GM12878 (cell line): ENCODE measurements at regions of chr18 and their contacts with region 1.

Region 1: GRCh38 chr18:4352746-4353551 is 102.2 kb downstream of the DLGAP1 start:
- DNase-seq: no peak
- ATAC-seq: peak; percentile 8
- H3K4me3 ChIP-seq: no peak overlapping the region
- H3K27ac ChIP-seq: no peak overlapping the region
- H3K4me1 ChIP-seq: no peaks in the 10 kb centered on the region
- H3K27me3 ChIP-seq: no peaks in the 10 kb centered on the region
- CTCF ChIP-seq: no peak
- EP300 ChIP-seq: no peak
- POLR2A ChIP-seq: no peak
- RAD21 ChIP-seq: no peak

Region 2: GRCh38 chr18:2797951-2798350 is 1555.0 kb before region 1 on chr18:
- CTCF ChIA-PET with region 1: no interaction called
- POLR2A ChIA-PET with region 1: no interaction called
- RAD21 ChIA-PET with region 1: no interaction called
- SMC1A ChIA-PET with region 1: no interaction called
- in situ Hi-C with region 1: no loop called
- intact Hi-C with region 1: no loop called
- DNase-seq: peak; percentile 8
- ATAC-seq: peak; percentile 66
- H3K4me3 ChIP-seq: no peak overlapping the region
- H3K27ac ChIP-seq: no peak overlapping the region
- H3K4me1 ChIP-seq: no peaks in the 10 kb centered on the region
- H3K27me3 ChIP-seq: no peaks in the 10 kb centered on the region
- CTCF ChIP-seq: no peak
- EP300 ChIP-seq: no peak
- POLR2A ChIP-seq: no peak
- RAD21 ChIP-seq: no peak

Region 3: DNA sequence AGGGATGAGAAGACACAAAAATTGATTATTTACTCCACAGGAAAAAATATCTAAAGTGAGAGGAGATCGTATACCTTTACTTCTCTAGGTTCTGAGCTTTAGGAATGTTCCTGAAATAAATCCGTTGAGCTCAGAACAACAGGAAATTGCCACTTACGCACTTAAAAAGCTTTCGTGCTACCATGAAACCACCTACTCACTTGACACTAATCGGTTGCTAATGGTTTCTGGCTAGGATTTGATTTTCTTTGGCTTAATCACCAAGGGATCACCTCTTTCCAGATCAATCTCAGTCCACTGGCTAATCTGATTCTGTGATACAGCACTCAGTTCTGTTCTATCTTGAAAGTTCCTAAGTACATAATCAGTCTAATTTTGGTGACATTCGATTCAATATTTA is 317.4 kb before region 1 on chr18:
- CTCF ChIA-PET with region 1: no interaction called
- POLR2A ChIA-PET with region 1: no interaction called
- RAD21 ChIA-PET with region 1: no interaction called
- SMC1A ChIA-PET with region 1: no interaction called
- in situ Hi-C with region 1: no loop called
- intact Hi-C with region 1: no loop called
- DNase-seq: no peak
- ATAC-seq: no peak
- H3K4me3 ChIP-seq: no peak overlapping the region
- H3K27ac ChIP-seq: no peak overlapping the region
- H3K4me1 ChIP-seq: no peaks in the 10 kb centered on the region
- H3K27me3 ChIP-seq: no peaks in the 10 kb centered on the region
- CTCF ChIP-seq: no peak
- EP300 ChIP-seq: no peak
- POLR2A ChIP-seq: no peak
- RAD21 ChIP-seq: no peak

Region 4: DNA sequence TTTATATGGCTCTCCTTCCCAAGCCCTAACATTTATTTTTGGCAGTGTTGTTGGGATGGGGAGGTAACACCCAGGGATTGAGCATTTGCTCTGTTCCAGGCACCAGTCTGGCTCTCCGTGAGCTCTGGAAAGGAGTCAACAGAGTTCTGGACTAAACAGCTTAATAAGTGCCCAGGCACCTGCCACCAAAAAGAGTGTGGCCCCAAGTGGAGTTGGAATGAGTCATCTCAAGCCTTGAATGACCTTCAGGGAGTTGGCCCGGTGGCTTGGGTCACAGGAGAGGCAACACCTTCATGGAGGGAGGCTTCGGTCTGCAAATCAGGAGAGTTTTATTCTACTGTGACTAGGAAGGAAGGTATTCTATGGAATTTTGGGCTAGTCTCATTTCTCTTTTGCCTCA is 101.1 kb before region 1 on chr18:
- CTCF ChIA-PET with region 1: interaction called, 4 read pairs
- POLR2A ChIA-PET with region 1: interaction called, 3 read pairs
- RAD21 ChIA-PET with region 1: interaction called, 6 read pairs
- SMC1A ChIA-PET with region 1: interaction called, 33 read pairs
- in situ Hi-C with region 1: no loop called
- intact Hi-C with region 1: no loop called
- DNase-seq: no peak
- ATAC-seq: peak; percentile 75
- H3K4me3 ChIP-seq: no peak overlapping the region
- H3K27ac ChIP-seq: no peak overlapping the region
- H3K4me1 ChIP-seq: no peaks in the 10 kb centered on the region; the same call in 1 of the 2 replicates
- H3K27me3 ChIP-seq: no peaks in the 10 kb centered on the region
- CTCF ChIP-seq: no peak
- EP300 ChIP-seq: peak; percentile 33 to 40; a peak in 2 of 4 replicates
- POLR2A ChIP-seq: no peak
- RAD21 ChIP-seq: no peak

Region 5: DNA sequence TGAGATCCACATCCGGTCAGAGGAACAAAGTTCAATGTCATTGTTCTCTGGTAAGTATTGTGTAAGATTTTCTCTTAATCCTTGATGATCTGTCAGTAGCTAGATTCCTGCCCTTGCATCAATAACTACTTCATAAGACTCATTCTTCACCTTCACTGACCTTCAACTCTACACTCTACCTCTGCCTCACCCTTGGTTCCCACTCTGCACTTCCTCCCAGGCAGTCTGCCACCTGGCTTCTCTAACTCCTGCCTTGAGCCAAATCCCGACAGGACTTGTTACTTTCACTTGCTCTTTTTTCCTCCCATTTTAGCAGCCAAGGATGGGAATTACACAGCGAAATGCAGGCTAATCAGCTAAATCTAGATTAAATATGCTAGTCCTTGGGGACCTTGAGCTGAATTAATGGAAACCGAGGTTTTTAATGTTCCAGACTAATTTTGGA is 88.6 kb before region 1 on chr18:
- CTCF ChIA-PET with region 1: interaction called, 4 read pairs
- POLR2A ChIA-PET with region 1: interaction called, 3 read pairs
- RAD21 ChIA-PET with region 1: interaction called, 21 read pairs
- SMC1A ChIA-PET with region 1: interaction called, 11 read pairs
- in situ Hi-C with region 1: no loop called
- intact Hi-C with region 1: no loop called
- DNase-seq: no peak
- ATAC-seq: peak; percentile 4; the same call in 2 of the 3 replicates
- H3K4me3 ChIP-seq: no peak overlapping the region
- H3K27ac ChIP-seq: no peak overlapping the region; the same call in 1 of the 2 replicates
- H3K4me1 ChIP-seq: no peaks in the 10 kb centered on the region
- H3K27me3 ChIP-seq: no peaks in the 10 kb centered on the region
- CTCF ChIP-seq: no peak
- EP300 ChIP-seq: no peak
- POLR2A ChIP-seq: no peak
- RAD21 ChIP-seq: no peak

Region 6: DNA sequence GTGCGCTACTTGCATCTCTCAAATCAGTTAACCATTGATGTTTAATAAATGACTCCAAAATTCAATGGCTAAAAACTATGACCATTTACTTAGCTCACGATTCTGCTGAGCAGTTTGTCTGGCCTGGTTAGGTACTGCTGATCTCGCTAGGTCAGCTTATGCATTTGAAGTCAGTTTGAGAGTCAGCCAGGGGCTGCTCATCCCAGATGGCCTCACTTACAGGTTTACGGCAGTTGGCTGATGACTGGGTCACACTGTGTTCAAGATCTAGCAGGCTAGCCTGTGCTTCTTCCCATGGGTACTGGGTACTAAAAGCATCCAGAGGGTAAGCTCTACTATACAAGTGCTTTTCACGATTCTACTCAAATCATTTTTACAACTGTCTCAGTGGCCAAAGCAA is 19.9 kb before region 1 on chr18:
- CTCF ChIA-PET with region 1: interaction called, 5 read pairs
- POLR2A ChIA-PET with region 1: interaction called, 3 read pairs
- RAD21 ChIA-PET with region 1: interaction called, 4 read pairs
- SMC1A ChIA-PET with region 1: interaction called, 29 read pairs
- in situ Hi-C with region 1: no loop called
- intact Hi-C with region 1: no loop called
- DNase-seq: no peak
- ATAC-seq: peak; percentile 17; the same call in 2 of the 3 replicates
- H3K4me3 ChIP-seq: no peak overlapping the region
- H3K27ac ChIP-seq: no peak overlapping the region
- H3K4me1 ChIP-seq: no peaks in the 10 kb centered on the region
- H3K27me3 ChIP-seq: no peaks in the 10 kb centered on the region
- CTCF ChIP-seq: no peak
- EP300 ChIP-seq: no peak
- POLR2A ChIP-seq: no peak
- RAD21 ChIP-seq: no peak

Region 7: GRCh38 chr18:4384932-4385331 is 32.0 kb after region 1 on chr18:
- CTCF ChIA-PET with region 1: interaction called, 5 read pairs
- POLR2A ChIA-PET with region 1: interaction called, 5 read pairs
- RAD21 ChIA-PET with region 1: interaction called, 19 read pairs
- SMC1A ChIA-PET with region 1: interaction called, 21 read pairs
- in situ Hi-C with region 1: no loop called
- intact Hi-C with region 1: loop called (anchors 5 kb)
- DNase-seq: no peak
- ATAC-seq: peak; percentile 88
- H3K4me3 ChIP-seq: no peak overlapping the region
- H3K27ac ChIP-seq: no peak overlapping the region
- H3K4me1 ChIP-seq: no peaks in the 10 kb centered on the region
- H3K27me3 ChIP-seq: no peaks in the 10 kb centered on the region
- CTCF ChIP-seq: no peak
- EP300 ChIP-seq: peak; percentile 40; a peak in 2 of 4 replicates
- POLR2A ChIP-seq: no peak
- RAD21 ChIP-seq: no peak

Region 8: DNA sequence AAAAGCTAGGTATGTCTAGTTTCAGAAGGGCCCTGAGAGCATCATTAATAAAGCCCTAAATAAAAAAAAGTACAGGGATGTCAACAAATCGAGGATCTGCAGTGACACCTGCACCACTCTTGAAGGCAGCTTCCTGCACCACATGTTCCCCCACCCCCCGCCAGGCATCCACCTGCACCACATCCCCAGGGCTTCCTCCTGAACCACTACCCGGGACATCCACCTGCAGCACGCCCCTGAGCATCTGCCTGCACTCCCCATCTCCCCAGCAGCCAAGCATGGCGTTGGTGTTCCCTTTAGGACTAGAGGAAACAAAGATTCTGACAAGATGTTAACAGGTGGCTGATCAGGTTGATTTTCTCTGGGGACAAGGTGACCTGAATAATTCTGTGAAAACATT is 47.0 kb after region 1 on chr18:
- CTCF ChIA-PET with region 1: no interaction called
- POLR2A ChIA-PET with region 1: interaction called, 3 read pairs
- RAD21 ChIA-PET with region 1: interaction called, 9 read pairs
- SMC1A ChIA-PET with region 1: interaction called, 19 read pairs
- in situ Hi-C with region 1: no loop called
- intact Hi-C with region 1: no loop called
- DNase-seq: no peak
- ATAC-seq: peak; percentile 6
- H3K4me3 ChIP-seq: no peak overlapping the region
- H3K27ac ChIP-seq: no peak overlapping the region
- H3K4me1 ChIP-seq: no peaks in the 10 kb centered on the region
- H3K27me3 ChIP-seq: no peaks in the 10 kb centered on the region
- CTCF ChIP-seq: no peak
- EP300 ChIP-seq: no peak
- POLR2A ChIP-seq: no peak
- RAD21 ChIP-seq: no peak

Region 9: DNA sequence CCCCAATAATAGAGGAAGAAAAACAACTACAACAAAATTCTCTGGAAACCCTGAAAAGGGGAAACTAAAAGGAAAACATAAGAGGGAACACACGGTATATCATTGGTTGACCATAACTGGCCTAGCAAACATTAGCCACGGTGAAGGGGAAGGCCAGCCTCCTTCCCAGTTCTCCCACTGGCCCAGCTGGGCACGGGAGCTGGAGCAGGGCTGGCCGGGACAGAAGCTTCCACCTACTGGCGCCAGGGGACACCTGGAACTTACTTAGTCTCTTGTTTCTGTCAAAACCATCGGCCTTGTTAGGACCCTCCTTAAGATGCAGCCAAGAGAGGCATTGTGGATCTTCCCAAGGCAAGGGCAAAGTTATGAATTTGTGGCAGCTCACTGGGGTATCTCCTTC is 158.2 kb after region 1 on chr18:
- CTCF ChIA-PET with region 1: no interaction called
- POLR2A ChIA-PET with region 1: no interaction called
- RAD21 ChIA-PET with region 1: no interaction called
- SMC1A ChIA-PET with region 1: no interaction called
- in situ Hi-C with region 1: no loop called
- intact Hi-C with region 1: no loop called
- DNase-seq: no peak
- ATAC-seq: no peak
- H3K4me3 ChIP-seq: no peak overlapping the region
- H3K27ac ChIP-seq: no peak overlapping the region
- H3K4me1 ChIP-seq: no peaks in the 10 kb centered on the region
- H3K27me3 ChIP-seq: no peaks in the 10 kb centered on the region
- CTCF ChIP-seq: no peak
- EP300 ChIP-seq: no peak
- POLR2A ChIP-seq: no peak
- RAD21 ChIP-seq: no peak